Left ventricle myocardium inferior (tissue), 1 donor: ENCODE measurements at regions of chr9 and their contacts with region 1.

Region 1: DNA sequence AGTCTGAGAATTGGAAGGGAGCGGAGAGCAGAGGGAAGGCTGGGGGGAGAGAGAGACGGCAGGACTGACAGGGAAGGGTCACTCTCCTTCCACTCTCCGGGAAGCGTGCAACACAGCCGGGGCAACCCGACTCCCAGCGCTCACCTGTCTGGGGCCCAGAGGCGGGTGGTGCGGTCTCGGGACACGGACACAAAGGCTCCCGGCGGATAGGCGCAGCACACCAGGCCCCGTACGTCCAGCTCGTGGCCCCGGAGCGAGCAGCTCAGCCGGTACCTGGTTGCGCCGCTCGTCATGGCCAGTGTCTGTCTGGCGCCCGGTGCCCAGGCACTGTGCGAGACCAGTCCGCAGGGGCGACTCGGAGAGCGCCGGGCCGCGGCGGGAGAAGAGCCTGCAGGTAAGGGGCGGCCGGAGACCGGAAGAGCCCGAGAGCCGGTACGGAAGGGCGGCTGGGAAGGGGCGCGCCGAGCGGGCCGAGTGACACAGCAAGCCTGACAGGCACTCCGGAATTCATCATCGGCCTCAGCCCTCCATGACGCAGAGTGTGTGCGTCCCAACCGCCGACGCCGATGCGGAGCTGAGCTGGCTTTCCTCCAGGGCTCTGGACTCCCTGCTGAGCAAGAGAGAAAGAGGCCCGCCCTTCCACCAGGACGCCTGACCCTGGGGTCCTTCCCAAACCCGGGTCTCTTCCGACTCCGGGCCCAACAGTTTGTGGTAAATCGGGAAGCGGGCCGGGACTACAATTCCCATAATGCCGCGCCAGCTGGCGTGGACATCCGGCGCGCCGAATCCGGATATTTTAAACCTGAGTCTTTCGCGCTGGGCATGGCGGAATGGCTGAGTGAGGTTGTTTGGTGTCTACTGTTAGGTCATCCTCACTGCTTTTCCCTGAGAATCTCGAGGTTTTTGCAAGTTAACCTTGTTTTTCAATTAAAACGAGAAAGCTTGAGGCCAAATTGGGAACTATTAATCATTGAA is at the start of gene PLAA:
- DNase-seq: peak; percentile 87
- H3K4me3 ChIP-seq: peak within 1 kb of the TSS; percentile 95
- H3K27ac ChIP-seq: peak within 1 kb of the TSS; percentile 98
- H3K4me1 ChIP-seq: peaks cover 47% of the 10 kb centered on the region
- H3K27me3 ChIP-seq: no peaks in the 10 kb centered on the region
- CTCF ChIP-seq: peak; percentile 42
- total RNA-seq, gene PLAA: 32.3 TPM

Region 2: DNA sequence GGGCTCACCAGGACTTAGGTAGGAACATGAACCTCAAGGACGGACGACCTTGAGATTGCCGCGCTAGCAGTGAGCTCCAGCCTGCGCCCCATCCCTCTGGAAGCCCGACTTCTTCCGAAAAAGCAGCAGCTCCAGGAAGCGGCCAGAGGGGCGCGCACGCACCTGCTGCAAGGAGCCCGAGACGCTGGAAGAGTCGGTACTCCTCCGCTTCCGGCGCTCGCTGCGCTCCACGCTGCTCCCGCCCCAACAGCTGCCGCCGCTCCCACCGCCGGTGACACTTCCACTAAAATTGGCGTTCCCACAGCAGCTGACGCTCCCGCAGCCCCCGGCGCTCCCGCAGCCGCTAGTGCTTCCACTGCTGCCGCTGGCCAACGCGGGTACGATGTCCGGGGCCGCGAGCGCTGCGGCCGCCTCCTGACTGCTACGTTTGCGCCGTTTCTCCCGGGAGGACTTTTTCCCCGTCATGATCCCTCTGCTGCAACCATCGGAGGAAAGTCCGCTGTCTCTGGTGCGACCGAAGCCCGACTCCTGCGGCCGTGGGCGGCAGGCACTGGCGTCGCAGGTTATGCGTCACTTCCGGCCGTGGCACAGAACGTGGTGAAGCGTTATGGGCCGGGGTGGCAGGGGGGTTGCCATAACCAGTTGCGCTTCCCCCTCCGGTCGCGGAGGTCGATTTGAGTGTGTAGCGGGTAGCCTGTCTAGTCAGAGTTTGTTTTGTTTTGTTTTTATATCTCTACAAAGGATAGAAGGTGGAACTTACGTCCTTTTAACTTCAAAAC is 54.6 kb before region 1 on chr9 and contains the start of gene CAAP1:
- intact Hi-C with region 1: loop called (anchors 10 kb)
- DNase-seq: peak; percentile 95
- H3K4me3 ChIP-seq: peak within 1 kb of the TSS; percentile 83
- H3K27ac ChIP-seq: peak within 1 kb of the TSS; percentile 96
- H3K4me1 ChIP-seq: peaks cover 40% of the 10 kb centered on the region
- H3K27me3 ChIP-seq: no peaks in the 10 kb centered on the region
- CTCF ChIP-seq: peak; percentile 53
- total RNA-seq, gene CAAP1: 7.9 TPM

Region 3: DNA sequence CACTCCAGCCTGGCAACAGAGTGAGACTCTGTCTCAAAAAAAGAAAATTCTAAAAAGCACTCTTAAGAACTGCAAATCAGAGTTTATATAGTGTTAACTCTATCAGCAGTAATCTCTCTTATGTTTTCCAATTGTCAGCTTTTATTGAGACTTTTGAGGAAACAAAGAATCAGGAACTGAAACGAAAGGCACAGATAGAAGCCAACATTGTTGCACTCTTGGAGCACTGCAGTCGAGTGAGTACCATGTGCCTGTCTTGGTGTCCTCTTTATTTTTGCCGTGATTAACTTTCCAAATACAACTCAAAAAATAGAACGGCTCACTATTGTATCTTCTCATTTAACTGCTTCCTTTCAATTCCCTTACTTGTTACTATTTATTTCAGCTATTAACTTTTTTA is 100.1 kb after region 1 on chr9:
- intact Hi-C with region 1: no loop called
- DNase-seq: no peak
- H3K4me3 ChIP-seq: no peak overlapping the region
- H3K27ac ChIP-seq: no peak overlapping the region
- H3K4me1 ChIP-seq: no peaks in the 10 kb centered on the region
- H3K27me3 ChIP-seq: no peaks in the 10 kb centered on the region
- CTCF ChIP-seq: no peak